Activated B cell treated with CpG ODN at 0.5 μM for 24 hours (primary cell): ENCODE measurements at regions of chr14 and their contacts with region 1.

Region 1: GRCh38 chr14:106633721-106634120 is 1107.3 kb downstream of the TMEM121 start:
- DNase-seq: no peak
- ATAC-seq: no peak
- H3K4me3 Mint-ChIP-seq: no peak overlapping the region
- H3K27ac Mint-ChIP-seq: no peak overlapping the region
- H3K4me1 Mint-ChIP-seq: peaks cover 5% of the 10 kb centered on the region
- H3K27me3 Mint-ChIP-seq: peaks cover 19% of the 10 kb centered on the region
- CTCF ChIP-seq: no peak

Region 2: DNA sequence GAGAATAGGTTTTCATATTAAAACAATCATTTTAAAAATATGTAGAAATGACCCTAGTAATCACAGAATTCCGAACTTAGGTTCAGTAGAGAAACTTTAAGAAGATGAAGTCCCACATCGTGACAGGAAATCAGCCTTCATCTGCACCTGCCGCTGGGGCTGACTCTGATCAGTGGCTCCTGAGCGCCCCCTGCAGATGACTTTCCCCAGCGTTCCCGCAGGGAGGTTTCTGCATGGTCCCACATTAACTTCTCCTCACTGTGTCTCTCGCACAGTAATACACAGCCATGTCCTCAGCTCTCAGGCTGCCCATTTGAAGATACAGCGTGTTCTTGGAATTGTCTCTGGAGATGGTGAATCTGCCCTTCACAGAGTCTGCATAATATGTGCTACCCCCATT is 23.7 kb after region 1 on chr14:
- CTCF ChIA-PET with region 1: no interaction called
- POLR2A ChIA-PET with region 1: no interaction called
- intact Hi-C with region 1: loop called (anchors 2 kb)
- DNase-seq: peak; percentile 49
- ATAC-seq: peak; percentile 58
- H3K4me3 Mint-ChIP-seq: no peak overlapping the region
- H3K27ac Mint-ChIP-seq: no peak overlapping the region
- H3K4me1 Mint-ChIP-seq: peaks cover 23% of the 10 kb centered on the region
- H3K27me3 Mint-ChIP-seq: peaks cover under 1% of the 10 kb centered on the region
- CTCF ChIP-seq: no peak